Psoas muscle (tissue), 8 donors: ENCODE measurements at regions of chrX and their contacts with region 1.

Region 1: DNA sequence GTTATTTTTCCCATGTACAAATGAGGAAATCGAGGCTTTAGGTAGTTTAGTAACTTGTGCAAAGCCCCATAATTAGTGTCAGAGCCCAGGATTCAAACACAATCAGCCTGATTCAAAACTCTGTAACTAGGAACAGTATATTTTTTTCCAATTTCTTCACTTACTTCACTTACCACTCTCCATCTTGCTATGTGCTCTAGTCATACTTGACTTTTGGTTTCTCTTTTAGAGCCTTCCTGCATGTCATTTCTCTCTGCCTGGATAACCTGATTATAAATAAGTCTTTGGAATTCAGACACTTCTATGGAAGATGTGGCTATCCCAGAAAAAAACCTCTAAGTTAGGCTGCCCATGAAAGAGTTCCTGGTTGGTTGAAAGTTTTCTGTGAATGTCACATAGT is 22.2 kb downstream of the SATL1 start:
- DNase-seq: no peak
- ATAC-seq: no peak
- H3K4me3 ChIP-seq: no peak overlapping the region
- H3K27ac ChIP-seq: no peak overlapping the region
- H3K4me1 ChIP-seq: no peaks in the 10 kb centered on the region
- H3K27me3 ChIP-seq: peaks cover 0 to 3% (median 0%) of the 10 kb centered on the region in 3 donors
- CTCF ChIP-seq: no peak

Region 2: DNA sequence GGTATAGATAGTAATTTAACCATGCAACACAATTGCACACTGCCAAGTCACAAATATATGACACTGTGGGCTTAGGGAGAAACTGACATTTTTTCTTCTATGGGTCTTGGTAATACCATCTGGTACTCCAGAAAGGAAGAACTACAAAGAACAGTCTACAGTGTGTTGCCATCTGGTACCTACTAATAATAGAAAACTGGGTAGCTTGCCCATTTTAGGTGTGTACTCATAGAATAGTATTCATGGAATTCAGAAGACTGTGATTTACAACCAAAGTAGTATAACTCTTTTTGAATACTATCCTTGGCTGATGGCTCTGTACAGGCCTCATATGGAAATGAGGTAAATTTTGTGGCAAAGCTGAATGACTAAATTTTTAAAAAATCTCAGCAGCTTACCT is 900.7 kb before region 1 on chrX:
- intact Hi-C with region 1: loop called in 1 of 2 experiments (anchors 5 kb)
- DNase-seq: no peak
- ATAC-seq: no peak
- H3K4me3 ChIP-seq: no peak overlapping the region
- H3K27ac ChIP-seq: no peak overlapping the region
- H3K4me1 ChIP-seq: no peaks in the 10 kb centered on the region
- H3K27me3 ChIP-seq: no peaks in the 10 kb centered on the region
- CTCF ChIP-seq: no peak

Region 3: GRCh38 chrX:85516131-85516530 is 294.8 kb after region 1 on chrX:
- intact Hi-C with region 1: no loop called
- DNase-seq: no peak
- ATAC-seq: no peak
- H3K4me3 ChIP-seq: no peak overlapping the region
- H3K27ac ChIP-seq: no peak overlapping the region
- H3K4me1 ChIP-seq: no peaks in the 10 kb centered on the region
- H3K27me3 ChIP-seq: no peaks in the 10 kb centered on the region
- CTCF ChIP-seq: no peak